ENCODE measurements at regions of chr1 and their contacts with region 1.

Region 1: DNA sequence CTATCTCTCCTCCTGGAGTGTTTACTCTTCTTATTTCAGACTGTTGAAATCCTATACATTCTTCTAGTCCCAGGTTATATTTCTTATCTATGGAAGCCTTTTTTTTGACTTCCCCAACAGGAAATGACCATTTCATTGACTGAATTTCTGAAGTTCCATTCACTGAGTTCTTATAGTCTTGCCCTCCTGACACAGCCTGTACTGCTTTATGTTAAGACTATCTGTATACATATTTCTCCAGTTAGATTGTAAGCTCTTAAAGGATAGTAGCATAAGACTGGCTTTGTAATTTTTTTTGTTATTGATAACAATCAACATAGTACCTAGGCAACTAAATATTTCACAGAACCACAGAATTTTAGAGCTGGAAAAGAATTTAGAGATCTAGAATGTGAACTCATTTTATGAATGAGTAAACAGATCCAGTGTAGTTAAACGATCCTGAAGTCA is 14.9 kb upstream of the MACF1 start:
- H3K4me3 ChIP-seq: no peak overlapping the region
- H3K27ac ChIP-seq: no peak overlapping the region
- H3K4me1 ChIP-seq: peaks cover 8% of the 10 kb centered on the region; the same call in 1 of the 2 replicates
- CTCF ChIP-seq: no peak

Region 2: DNA sequence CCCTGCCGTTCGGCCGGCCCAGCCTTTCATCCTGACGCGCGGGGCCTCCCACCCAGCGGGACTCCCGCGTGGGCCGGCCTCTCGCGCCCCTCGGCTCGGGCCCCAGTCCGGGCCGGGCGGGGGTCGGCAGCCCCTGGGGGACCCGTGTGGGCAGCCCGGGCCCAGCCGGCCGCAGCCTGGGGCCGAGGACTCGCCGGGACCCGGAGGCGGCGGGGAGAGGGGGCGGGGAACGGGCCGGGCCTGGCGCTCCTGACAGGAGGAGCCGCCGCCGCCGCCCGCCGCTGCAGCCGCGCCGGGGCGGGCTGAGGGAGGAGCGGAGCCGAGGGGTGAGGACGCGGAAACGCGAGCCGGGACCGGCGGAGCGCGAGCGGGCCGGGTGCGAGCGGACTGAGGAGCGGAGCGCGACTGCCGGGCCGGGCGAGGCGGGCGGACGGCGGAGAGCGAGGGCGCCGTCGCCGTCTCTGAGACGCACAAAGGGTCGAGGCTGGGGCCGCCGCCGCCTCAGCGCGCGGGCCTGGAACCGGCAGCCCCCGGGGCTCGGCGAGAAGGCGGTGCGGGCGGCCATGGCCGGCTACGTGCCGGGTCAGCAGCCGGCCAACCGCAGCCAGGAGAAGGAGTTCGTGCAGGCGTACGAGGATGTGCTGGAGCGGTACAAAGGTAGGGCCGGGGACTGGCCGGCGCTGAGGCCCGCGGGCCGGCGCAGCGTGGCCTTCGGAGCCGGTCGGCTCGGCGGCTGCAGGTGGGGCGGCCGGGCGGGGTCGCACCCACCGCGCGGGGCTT is 84.4 kb before region 1 on chr1:
- CTCF ChIA-PET with region 1: interaction called, 62 read pairs
- POLR2A ChIA-PET with region 1: interaction called, 14 read pairs
- H3K4me3 ChIP-seq: peak overlapping the region; percentile 72
- H3K27ac ChIP-seq: peak overlapping the region; percentile 95
- H3K4me1 ChIP-seq: peaks cover 18% of the 10 kb centered on the region
- CTCF ChIP-seq: no peak

Region 3: DNA sequence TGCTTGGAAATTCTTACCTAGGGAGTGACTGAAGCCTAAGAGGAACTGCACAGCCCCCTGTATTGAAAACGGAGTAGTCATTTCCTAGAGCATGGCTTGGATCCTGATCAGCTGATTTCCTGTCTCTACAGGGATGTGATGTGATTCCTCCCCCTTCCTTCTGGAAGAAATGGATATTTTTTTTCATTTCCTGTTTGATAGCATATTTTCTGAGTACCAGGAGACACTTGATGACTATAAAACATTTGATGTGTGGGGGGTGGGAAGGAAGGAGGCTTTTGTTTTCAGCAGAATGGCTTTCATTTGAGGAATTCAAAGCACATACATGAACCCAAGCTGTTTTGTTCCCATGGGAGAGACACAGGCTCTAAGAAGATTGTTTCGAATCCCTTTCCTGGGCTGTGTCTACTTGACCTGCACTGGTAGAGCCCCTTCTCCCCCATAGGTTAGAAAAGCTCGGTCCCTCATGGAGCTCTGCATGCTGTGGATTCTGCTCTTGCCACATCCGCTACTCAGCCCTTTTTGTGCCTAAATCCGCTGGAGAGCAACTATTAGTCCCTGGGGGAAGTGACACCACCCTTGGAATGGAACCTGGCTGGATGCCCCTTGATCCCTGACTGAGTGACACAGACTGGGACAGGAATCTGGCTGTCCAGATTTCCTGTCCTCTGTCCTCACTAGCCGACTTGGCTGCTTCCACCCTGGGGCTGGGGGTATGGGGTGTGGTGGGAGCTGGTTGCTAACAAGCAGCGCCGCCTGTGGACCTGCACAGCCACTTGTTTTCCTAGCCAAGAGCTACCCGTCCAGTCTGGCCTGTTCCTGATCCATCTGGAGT is 56.9 kb before region 1 on chr1:
- CTCF ChIA-PET with region 1: interaction called, 56 read pairs
- POLR2A ChIA-PET with region 1: interaction called, 7 read pairs
- H3K4me3 ChIP-seq: no peak overlapping the region
- H3K27ac ChIP-seq: no peak overlapping the region; the same call in 1 of the 2 replicates
- H3K4me1 ChIP-seq: peaks cover 13% of the 10 kb centered on the region
- CTCF ChIP-seq: no peak

Region 4: DNA sequence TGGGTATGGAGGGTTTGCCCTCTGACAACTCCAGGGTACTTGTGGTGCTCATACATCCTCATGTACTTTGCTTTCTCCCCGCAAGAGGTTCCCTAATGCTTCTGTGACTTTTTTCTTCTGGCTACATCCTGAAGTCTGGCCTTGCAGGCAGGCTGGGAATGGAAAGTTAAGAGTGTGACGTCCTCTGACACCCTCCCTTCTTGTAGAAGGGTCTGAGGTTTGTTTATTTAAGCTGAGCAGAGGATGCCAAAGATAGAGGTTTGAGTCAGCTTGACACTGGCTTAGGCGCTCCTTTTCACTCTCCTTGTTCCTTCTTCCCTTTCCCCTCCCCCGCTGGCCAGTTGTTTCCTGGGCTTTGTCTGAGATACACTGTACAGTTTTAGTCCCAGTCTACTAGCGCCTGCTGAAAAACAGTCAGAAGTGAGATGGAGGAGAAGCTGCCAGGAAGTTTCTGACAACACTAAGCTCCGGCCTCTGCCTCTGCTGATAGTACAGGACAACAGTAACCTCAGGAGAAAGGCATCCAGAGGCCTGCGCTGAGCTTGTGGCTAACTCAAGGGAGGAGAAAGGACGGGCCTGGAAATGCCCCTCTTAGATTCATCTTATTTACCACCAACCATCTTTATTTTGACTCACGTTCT is 14.9 kb after region 1 on chr1 and contains the start of gene MACF1:
- CTCF ChIA-PET with region 1: interaction called, 42 read pairs
- POLR2A ChIA-PET with region 1: interaction called, 4 read pairs
- H3K4me3 ChIP-seq: peak within 1 kb of the TSS; percentile 29
- H3K27ac ChIP-seq: peak within 1 kb of the TSS; percentile 63
- H3K4me1 ChIP-seq: peaks cover 11% of the 10 kb centered on the region
- CTCF ChIP-seq: peak; percentile 20; the same call in 1 of the 2 replicates

Region 5: DNA sequence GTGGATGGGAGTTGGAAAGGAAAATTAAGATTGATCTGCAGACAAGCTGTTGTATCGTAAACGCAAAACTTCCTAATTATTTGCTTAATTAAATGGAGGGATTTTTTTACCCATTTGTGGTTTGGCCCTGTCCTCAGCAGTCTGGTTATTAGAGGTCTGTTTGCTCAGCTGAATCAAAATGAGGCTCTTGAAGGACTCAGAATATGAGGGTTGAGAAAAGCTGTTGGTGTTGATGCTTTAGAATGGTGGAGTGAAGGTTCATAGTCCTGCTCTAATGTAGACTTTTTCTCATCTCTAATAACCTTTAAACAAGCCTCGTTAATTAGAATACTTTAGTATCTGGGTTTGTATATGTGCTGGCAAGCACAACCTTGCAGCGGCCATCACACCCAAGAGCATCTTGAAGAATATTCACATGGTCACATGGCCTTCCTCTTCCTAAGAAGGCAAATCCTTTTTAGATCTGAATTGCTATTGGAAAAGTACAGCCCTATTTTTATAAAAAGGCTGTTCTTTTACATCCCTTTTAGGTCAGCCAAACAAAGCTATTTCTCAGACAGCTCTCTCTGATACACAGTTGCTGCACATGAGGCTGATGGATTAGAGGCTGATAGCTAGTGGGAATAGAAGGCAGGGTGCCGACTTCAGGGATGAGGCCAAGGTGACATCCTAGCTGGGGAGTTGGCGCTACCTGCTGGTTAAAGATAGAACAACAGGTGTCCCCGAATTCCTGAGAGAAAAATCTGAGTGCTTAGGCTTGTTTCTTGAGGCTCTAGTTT is 68.7 kb after region 1 on chr1:
- CTCF ChIA-PET with region 1: interaction called, 184 read pairs
- POLR2A ChIA-PET with region 1: interaction called, 10 read pairs
- H3K4me3 ChIP-seq: no peak overlapping the region
- H3K27ac ChIP-seq: no peak overlapping the region
- H3K4me1 ChIP-seq: peaks cover 11% of the 10 kb centered on the region; the same call in 1 of the 2 replicates
- CTCF ChIP-seq: peak; percentile 84

Region 6: GRCh38 chr1:39317910-39318633 is 128.5 kb after region 1 on chr1:
- CTCF ChIA-PET with region 1: no interaction called
- POLR2A ChIA-PET with region 1: no interaction called
- H3K4me3 ChIP-seq: no peak overlapping the region
- H3K27ac ChIP-seq: no peak overlapping the region
- H3K4me1 ChIP-seq: no peaks in the 10 kb centered on the region
- CTCF ChIP-seq: no peak